Astrocyte of the cerebellum (primary cell): ENCODE measurements at regions of chr15 and their contacts with region 1.

Region 1: GRCh38 chr15:76386121-76386520 is 49.5 kb downstream of the ISL2 start:
- DNase-seq: no peak
- H3K4me3 ChIP-seq: no peak overlapping the region
- CTCF ChIP-seq: no peak

Region 2: DNA sequence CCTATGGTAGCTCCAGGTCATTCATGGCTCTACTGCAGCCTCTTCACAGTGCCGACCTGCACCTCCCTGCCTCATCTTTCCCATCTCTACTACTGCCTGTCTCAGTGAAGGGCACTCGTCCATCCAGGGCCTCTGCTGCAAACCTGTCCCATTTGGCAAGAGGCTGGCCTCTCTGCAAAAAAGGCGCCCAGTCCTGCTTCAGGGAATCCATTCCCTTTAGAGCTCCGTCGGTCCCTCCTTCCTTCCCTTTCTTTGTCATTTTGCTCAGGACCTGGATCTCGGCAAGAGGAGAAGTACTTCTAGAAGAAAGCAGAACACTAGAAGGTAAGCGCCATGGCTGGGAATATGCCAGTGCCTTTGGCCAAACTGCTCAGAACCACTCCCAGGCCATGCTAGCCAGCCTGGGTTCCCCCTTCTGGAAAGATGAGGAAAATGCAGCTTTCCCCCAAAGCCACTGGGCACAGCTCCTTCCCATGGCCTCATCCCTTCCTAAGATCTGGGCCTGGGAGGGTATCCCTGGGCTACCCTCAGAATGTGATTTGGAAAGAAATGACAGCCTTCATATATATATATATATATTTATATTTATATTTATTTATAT is 55.9 kb before region 1 on chr15:
- in situ Hi-C with region 1: no loop called
- DNase-seq: peak; percentile 39
- H3K4me3 ChIP-seq: no peak overlapping the region
- CTCF ChIP-seq: peak; percentile 72

Region 3: DNA sequence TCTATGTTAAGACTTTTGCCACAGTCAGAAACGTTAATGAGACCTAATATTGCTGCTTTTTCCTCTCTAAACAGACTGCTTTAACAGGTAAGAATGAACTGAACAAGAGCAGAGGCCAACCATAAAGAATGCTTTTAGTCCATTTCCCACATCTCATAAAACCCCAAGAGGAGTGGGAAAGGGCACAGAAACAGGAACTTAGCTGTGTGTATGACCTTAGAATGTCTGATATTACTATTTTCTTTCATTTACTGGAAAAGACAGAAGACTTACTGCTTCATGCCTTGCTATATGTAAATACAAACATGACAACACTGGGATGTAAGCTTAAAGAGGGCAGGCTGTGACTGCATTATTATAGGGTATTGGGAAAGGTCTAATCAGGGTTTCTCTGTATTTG is 65.4 kb after region 1 on chr15:
- in situ Hi-C with region 1: loop called (anchors 5 kb)
- DNase-seq: no peak
- H3K4me3 ChIP-seq: no peak overlapping the region
- CTCF ChIP-seq: no peak